Posterior cingulate gyrus (tissue), 11 donors: ENCODE measurements at regions of chr4 and their contacts with region 1.

Region 1: DNA sequence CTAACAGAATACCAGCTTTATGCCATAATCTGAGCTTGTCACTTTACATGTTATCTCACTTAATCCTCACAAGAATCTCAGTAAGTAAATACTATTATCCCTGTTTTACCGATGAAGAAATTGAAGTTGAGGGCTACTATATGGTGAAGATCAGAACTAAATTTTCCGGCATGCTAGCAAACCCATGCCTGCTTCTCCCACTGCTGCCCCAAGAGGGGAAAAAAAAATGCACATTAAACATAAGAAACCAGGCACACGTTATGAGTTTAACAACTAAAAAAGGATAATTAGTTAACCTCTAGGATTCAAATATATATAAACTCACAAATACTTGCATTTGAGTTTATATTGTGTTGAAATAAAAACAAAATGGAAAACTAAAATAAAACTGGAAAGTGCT is 10.8 kb downstream of the SLC10A7 start:
- DNase-seq: no peak

Region 2: DNA sequence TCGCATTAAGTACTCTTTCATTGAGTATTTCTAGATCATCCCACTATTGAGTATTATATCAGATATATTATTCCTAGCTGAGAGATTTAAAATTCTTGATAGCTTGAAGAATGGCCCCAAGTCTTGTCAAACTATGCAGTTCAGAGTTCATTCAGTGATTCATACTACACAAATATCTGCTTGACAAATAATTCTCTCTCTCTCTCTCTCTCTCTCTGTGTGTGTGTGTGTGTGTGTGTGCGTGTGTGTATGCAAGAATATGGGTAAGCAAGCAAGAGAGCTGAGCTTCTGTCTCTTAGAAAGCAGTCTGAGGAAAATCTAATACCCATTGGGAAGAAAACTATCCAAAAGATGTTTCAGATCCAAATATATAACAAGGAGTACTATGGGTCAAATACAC is 131.2 kb before region 1 on chr4:
- intact Hi-C with region 1: loop called (anchors 10 kb)
- DNase-seq: no peak

Region 3: DNA sequence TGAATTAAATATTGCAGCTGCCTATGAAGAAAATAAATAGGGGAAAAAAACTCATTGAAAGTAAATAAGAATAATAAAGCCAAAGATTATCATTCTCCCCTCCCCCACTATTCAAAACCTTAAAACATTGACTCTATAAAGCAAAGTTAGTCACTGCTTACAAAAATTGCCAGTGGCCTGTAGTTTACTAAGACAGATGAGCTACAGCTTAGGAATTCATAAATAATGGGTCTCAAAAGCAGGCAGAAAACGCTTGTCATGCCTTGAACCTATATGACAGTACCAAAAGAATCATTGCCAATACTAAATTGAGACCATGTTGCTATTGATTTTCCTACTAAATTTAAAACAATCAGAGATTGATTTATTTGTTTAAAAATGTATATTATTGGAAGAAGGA is 68.1 kb before region 1 on chr4:
- intact Hi-C with region 1: no loop called
- DNase-seq: no peak

Region 4: DNA sequence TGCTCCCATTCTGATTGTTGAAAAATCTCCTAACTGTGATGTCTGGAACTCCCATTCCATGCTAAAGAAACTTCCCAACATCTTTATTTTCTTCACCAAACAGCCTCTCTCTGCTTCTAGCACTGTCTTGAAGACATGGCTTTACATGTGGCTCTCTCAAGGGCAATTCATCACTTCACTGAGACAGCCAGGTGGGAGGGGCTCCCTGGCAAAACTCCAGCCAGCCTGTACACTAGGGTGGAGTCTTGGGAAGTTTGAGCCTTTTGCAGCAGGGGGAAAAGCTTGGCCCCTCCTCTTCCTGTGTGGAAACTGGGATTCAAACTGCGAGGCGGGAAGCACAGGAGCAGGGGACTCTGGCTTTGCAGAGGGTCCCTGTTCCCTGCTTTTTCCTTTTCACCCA is 565.2 kb after region 1 on chr4:
- intact Hi-C with region 1: no loop called
- DNase-seq: no peak